Mammary epithelial cell (primary cell): ENCODE measurements at regions of chr12 and their contacts with region 1.

Region 1: GRCh38 chr12:79174626-79175025 is 310.1 kb downstream of the SYT1 start:
- DNase-seq: peak; percentile 36
- H3K4me3 ChIP-seq: no peak overlapping the region
- H3K27ac ChIP-seq: no peak overlapping the region
- H3K4me1 ChIP-seq: no peaks in the 10 kb centered on the region
- H3K27me3 ChIP-seq: no peaks in the 10 kb centered on the region
- CTCF ChIP-seq: peak; percentile 12 to 50

Region 2: GRCh38 chr12:78146365-78146772 is 1028.3 kb before region 1 on chr12:
- CTCF ChIA-PET with region 1: no interaction called
- dilution Hi-C with region 1: no loop called
- in situ Hi-C with region 1: no loop called
- intact Hi-C with region 1: loop called (anchors 5 kb)
- DNase-seq: peak; percentile 4
- H3K4me3 ChIP-seq: no peak overlapping the region
- H3K27ac ChIP-seq: no peak overlapping the region
- H3K4me1 ChIP-seq: no peaks in the 10 kb centered on the region
- H3K27me3 ChIP-seq: no peaks in the 10 kb centered on the region
- CTCF ChIP-seq: peak; percentile 60 to 69

Region 3: DNA sequence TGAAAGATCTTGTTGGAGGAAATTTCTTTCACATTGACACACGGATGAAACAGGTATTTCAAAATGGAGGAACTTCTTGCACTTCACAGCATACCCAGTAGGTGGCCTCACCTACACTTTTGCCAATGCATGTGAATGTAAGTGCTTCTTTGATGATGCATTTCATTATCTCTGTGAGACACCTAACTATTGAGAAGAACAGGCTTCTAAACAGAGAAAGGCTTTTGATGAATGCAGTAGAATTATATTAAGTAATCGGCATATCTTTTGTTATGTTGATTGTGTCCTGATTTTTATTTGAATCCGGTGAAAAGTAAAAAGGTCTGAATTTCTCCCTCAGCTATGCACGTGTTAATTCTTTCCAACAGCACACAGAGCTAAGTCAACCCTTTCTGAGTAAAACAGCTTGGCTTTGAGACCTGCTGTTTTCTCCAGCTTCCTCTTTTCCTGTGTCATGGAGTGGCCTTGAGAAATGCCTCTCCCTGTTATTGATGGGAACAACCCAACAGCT is 945.0 kb before region 1 on chr12:
- CTCF ChIA-PET with region 1: no interaction called
- dilution Hi-C with region 1: no loop called
- in situ Hi-C with region 1: no loop called
- intact Hi-C with region 1: loop called (anchors 1 kb)
- DNase-seq: peak; percentile 53
- H3K4me3 ChIP-seq: no peak overlapping the region
- H3K27ac ChIP-seq: no peak overlapping the region
- H3K4me1 ChIP-seq: no peaks in the 10 kb centered on the region
- H3K27me3 ChIP-seq: no peaks in the 10 kb centered on the region
- CTCF ChIP-seq: peak; percentile 86 to 87

Region 4: DNA sequence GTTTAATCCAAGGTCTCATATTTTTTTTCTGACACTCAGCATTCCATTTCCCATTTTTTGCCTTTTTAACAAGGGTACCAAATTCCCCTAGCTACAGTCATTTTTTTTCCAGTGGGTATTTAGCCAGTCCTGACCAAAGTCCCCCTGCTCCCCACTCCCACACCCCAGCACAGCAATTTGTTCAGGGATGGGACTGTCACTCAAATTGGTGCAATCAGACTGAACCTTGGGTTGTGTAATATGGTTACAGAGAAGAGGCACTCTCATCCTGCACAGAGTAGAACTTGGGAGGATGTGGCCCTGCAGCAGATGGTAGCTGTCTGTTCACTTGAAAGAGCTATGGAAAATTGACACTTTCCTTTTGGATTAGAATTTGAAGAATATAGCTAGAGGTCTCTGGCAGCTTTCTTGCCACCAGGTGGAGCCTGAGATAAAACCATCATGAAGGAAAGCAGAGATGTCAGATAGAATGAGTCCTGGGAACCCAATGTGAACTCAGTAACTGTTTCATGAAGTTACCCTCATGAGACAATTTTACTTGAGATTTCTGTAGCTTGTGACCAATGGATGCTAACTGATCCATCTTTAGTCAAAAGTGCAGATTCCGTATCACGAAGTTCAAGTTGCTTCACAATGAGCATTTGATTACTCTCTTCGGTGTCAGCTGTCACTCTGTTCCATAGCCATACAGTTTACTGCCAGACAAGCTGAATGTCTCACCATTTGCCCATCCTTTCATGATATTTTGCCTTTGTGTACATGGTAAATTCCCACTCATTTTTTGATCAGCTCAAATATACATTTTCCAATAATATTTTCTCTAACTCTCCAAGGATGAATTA is 704.1 kb before region 1 on chr12:
- CTCF ChIA-PET with region 1: interaction called, 6 read pairs
- dilution Hi-C with region 1: no loop called
- in situ Hi-C with region 1: no loop called
- intact Hi-C with region 1: loop called (anchors 1 kb)
- DNase-seq: peak; percentile 32
- H3K4me3 ChIP-seq: no peak overlapping the region
- H3K27ac ChIP-seq: no peak overlapping the region
- H3K4me1 ChIP-seq: no peaks in the 10 kb centered on the region
- H3K27me3 ChIP-seq: no peaks in the 10 kb centered on the region
- CTCF ChIP-seq: peak; percentile 58 to 65

Region 5: DNA sequence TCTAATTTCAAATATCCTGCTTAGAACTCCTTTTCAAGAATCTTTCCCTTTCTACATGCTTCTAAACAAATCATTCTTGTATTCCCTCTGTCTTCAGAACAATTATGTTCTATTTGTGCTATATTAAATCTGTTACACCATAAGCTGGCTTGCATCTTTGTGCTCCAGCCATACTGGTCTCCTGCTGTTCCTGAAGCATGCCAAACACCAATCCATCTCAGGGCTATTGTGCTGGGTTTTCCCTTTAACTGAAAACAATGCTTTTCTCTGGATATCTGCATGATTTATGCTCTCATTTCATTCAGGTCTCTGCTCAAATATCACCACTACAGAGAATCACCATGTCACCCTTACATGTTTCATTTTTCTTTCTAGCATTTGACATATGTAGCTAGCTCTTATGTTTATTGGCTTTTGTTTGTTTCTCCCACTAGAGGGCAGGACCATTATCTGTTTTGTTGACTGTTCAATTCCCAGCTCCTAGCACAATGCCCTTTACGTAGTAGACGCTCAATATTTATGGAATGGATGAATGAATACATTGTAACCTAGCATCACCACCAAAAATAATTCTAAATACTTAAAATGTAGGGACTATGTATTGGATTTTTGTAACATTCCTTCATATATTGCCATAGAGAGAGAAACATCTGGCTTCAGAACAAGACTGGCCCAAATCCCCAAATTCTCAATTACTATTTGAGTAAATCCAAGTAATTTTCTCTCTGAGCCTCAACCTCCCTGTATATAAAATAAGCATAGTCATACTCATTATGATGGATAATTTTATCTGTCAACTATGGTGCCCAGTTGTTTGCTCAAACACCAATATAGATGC is 612.0 kb before region 1 on chr12:
- CTCF ChIA-PET with region 1: interaction called, 5 read pairs
- dilution Hi-C with region 1: no loop called
- in situ Hi-C with region 1: no loop called
- intact Hi-C with region 1: loop called (anchors 5 kb)
- DNase-seq: peak; percentile 9
- H3K4me3 ChIP-seq: no peak overlapping the region
- H3K27ac ChIP-seq: no peak overlapping the region
- H3K4me1 ChIP-seq: no peaks in the 10 kb centered on the region
- H3K27me3 ChIP-seq: no peaks in the 10 kb centered on the region
- CTCF ChIP-seq: peak; percentile 39 to 57

Region 6: DNA sequence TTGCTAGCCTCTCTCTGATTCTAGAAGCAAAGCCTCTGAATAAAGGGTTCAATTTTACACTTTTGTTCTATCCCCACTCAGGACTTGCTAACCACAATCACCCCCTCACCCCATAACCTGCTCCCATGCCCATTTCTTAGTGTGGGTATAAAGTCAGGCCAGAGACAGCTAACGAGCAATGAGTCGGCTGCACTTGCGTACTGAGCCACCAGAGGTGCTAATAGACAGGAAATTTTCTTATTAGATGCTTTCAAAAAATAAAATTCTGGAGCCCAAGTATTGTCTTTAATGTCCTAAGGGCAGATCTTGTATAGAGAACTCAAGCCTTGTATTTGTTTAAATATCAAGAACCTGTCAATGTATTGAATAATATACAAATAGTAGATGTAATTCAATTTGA is 53.1 kb before region 1 on chr12:
- CTCF ChIA-PET with region 1: no interaction called
- dilution Hi-C with region 1: no loop called
- in situ Hi-C with region 1: no loop called
- intact Hi-C with region 1: no loop called
- DNase-seq: no peak
- H3K4me3 ChIP-seq: no peak overlapping the region
- H3K27ac ChIP-seq: no peak overlapping the region
- H3K4me1 ChIP-seq: no peaks in the 10 kb centered on the region
- H3K27me3 ChIP-seq: no peaks in the 10 kb centered on the region
- CTCF ChIP-seq: peak; percentile 36 to 46